ENCODE measurements at regions of chr10 and their contacts with region 1.

Region 1: DNA sequence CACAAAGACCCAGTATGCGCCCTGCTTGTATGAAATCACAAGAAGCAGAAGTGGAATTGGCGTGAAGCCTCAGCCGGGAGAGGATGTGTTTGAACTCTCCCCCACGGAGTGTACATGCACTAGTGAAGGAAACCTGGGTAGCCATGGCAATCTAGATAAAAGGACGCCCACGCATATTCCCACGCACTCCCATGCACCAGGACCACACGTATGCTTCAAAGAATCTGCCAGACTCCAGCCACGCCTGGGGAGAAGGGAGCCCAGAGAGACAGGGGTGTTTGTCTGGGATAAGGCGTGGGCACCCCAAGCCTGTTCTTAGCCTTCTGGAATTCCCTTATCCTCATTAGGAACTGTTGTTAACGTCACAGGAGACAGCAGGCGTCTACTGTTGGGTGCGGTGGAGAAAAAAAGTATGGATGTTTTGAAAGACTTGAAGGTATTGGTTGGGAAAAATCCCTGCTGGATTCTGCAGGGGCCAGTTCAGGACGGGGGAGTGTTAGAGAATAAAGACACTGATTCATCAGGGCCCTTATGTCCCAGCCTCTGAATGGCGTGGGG is 28.9 kb upstream of the ECHDC3 start:
- DNase-seq: peak in 1 of 2 donors; percentile 44
- ATAC-seq: peak in 7 of 8 donors; percentile 38 to 81 (median 64)
- H3K4me3 ChIP-seq: no peak overlapping the region
- H3K27ac ChIP-seq: no peak overlapping the region
- H3K4me1 ChIP-seq: peaks cover 0 to 23% (median 0%) of the 10 kb centered on the region in 9 donors
- H3K27me3 ChIP-seq: peaks cover 0 to 12% (median 4%) of the 10 kb centered on the region in 7 donors
- CTCF ChIP-seq: no peak

Region 2: DNA sequence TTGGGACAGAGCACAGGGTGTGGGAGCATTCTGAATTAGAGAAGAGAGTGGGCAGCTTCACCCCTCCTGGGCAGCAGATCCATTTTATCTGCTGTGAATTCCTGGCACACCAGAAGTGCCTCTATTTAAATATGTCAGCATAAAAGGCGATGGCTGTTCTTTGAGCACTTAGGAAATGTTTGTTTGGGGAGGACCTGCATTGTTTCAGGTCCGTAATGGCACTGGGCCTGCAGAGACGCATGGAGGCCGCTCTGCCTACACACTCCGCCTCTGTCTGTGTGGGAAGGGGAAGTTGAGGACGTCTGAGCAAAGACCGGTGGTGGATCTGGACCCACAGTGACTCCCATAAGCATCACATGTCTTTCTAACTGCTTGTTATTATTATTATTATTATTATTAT is 889.3 kb after region 1 on chr10:
- intact Hi-C with region 1: loop called in 1 of 10 experiments (anchors 5 kb)
- DNase-seq: no peak
- ATAC-seq: no peak
- H3K4me3 ChIP-seq: no peak overlapping the region
- H3K27ac ChIP-seq: no peak overlapping the region
- H3K4me1 ChIP-seq: peaks cover 0 to 21% (median 0%) of the 10 kb centered on the region in 9 donors
- H3K27me3 ChIP-seq: no peaks in the 10 kb centered on the region
- CTCF ChIP-seq: no peak

Measured in heart right ventricle (tissue), 16 donors.